ENCODE measurements at regions of chr14 and their contacts with region 1.

Region 1: DNA sequence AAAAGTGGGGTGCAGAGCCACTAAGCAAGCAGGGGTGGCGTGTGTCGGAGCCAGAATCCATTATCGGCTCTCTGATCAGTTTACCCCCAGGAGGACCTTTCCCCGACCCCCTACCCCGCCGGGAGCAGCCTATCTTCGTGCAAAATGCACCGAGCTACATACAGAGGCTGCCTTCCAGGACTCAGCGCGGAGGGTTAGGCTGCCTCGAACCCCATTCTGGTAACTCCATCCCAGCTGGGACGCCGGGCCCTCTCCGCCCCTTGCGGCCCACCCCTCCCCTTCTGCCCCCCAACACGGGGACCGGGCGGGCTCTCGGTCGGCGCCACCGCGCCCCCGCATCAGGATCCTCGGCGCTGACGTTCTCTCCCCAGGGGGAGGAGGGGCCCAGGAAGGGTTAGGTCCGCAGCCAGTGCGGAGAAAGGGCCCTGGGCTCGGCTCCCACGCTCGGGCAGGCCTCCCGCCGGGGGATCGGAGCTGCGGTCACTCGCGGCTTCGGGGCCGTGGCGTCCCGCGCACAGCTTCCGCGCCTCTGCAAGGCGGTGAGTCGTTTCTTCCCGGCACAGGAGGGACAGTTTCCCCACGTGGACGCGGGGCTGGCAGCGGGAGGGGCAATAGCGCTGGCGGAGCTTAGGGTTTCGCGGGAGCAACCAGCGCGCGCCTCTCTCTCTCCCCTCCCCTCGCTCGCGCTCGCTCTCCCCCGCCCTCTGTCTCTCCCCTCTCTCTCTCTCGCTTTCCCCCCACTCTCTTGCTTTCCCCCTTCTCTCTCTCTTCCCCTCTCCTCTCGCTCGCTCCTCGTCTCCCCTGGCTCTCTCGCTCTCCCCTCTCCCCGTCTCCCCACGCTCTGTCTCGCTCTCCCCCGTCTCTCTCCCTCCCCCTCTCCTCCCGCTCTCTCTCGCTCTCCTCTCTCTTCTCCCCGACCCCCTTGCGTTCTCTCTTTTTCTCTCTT is 12.5 kb upstream of the MAP3K9 start:
- DNase-seq: peak; percentile 71 to 79 (median 78)
- ATAC-seq: peak; percentile 69 to 77 (median 74)
- H3K4me3 ChIP-seq: peak overlapping the region; percentile 58 to 72 (median 62)
- H3K27ac ChIP-seq: peak overlapping the region in 2 of 3 donors; percentile 33 to 56
- H3K4me1 ChIP-seq: peaks cover 0 to 11% (median 2%) of the 10 kb centered on the region in 4 donors
- H3K27me3 ChIP-seq: no peaks in the 10 kb centered on the region
- CTCF ChIP-seq: no peak
- POLR2A ChIP-seq: peak; percentile 66

Region 2: GRCh38 chr14:70907176-70907995 is 85.5 kb after region 1 on chr14 and contains the start of gene PCNX1:
- intact Hi-C with region 1: loop called in 1 of 2 experiments (anchors 5 kb)
- DNase-seq: peak; percentile 93
- ATAC-seq: peak; percentile 85 to 93 (median 86)
- H3K4me3 ChIP-seq: peak within 1 kb of the TSS; percentile 75 to 94 (median 90)
- H3K27ac ChIP-seq: peak within 1 kb of the TSS; percentile 86 to 93 (median 92)
- H3K4me1 ChIP-seq: peaks cover 0 to 32% (median 10%) of the 10 kb centered on the region in 4 donors
- H3K27me3 ChIP-seq: no peaks in the 10 kb centered on the region
- CTCF ChIP-seq: peak; percentile 82 to 92 (median 86)
- POLR2A ChIP-seq: peak; percentile 70
- total RNA-seq, gene PCNX1: 25.4 to 33.2 (median 29.3) TPM

Region 3: GRCh38 chr14:70919774-70920173 is 97.9 kb after region 1 on chr14:
- intact Hi-C with region 1: no loop called
- DNase-seq: no peak
- ATAC-seq: peak; percentile 16 to 54 (median 44)
- H3K4me3 ChIP-seq: no peak overlapping the region
- H3K27ac ChIP-seq: no peak overlapping the region
- H3K4me1 ChIP-seq: peaks cover 0 to 19% (median 3%) of the 10 kb centered on the region in 4 donors
- H3K27me3 ChIP-seq: no peaks in the 10 kb centered on the region
- CTCF ChIP-seq: no peak
- POLR2A ChIP-seq: no peak

Measured in right lobe of liver (tissue), 6 donors.